Cardiac septum (tissue), 1 donor: ENCODE measurements at regions of chr5 and their contacts with region 1.

Region 1: GRCh38 chr5:142324871-142325724 is at the start of gene SPRY4:
- DNase-seq: peak; percentile 93
- total RNA-seq, gene SPRY4: 20.6 TPM

Region 2: GRCh38 chr5:142151436-142152383 is 173.4 kb before region 1 on chr5:
- intact Hi-C with region 1: loop called (anchors 2 kb)
- DNase-seq: no peak

Region 3: DNA sequence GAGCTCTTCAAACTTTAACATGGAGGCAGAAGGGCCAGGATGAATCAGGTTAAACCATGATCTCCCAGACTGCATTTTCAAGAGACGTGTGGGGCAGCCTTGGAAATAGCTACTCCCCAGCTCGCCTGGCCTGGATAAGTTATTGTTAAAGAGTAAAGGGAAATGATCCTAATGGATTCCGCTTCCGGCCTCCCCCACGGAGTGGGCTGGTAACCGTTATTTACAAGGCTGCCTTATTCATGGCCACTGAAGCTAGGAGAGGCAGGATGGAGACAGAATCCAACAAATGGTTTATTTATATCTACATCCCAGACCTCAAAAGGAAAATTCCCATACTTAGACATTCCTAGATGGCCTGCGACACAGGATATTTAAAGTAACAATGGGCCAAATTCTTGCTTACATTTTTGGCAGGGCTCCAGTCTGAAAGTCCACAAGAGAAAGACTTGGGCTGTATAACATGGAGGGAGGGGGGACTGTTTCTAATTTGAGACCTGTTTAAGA is 28.1 kb before region 1 on chr5:
- intact Hi-C with region 1: loop called (anchors 2 kb)
- DNase-seq: no peak

Region 4: DNA sequence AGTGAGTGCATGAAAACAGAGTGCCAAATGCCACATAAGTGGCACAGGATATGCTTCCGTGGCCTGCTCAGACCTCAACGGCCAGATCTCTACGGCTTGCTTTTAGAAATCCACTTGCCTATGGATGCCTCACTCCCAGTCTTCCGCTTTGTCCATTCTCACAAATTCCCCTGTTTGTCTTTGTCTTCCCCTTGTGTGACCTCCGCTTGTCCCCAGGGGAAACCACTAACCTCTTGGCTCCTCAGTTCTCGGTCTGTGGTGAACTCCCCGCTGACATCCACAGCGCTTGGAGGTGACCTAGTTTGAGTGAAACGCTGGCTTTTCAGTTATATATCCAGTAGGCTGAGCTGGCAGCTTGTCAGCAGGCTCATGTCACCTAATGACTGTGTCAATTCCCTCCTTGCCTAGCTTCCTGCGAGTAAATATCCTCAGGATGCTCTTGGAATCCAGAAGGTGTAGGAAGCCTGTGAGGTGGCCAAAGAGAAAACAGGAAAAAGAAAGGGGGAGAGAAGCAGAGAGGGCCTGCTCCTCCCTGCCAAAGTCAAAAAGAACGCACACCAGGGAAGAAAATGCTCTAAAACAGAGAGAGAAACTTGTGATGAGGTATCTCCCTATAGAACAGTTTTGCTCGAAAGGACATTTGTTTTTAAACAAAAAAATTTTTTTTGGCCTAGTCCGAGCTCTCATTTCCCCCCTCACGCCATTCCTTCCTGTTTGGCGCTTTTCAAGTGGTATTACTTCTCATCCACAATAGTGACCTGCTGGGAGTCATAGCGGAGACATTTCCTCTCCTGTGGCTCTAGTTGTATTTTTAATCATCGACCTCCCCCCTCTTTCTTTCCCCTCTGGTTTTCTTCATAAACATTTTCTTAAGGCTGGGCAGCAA is 101.3 kb after region 1 on chr5:
- intact Hi-C with region 1: loop called (anchors 5 kb)
- DNase-seq: no peak

Region 5: DNA sequence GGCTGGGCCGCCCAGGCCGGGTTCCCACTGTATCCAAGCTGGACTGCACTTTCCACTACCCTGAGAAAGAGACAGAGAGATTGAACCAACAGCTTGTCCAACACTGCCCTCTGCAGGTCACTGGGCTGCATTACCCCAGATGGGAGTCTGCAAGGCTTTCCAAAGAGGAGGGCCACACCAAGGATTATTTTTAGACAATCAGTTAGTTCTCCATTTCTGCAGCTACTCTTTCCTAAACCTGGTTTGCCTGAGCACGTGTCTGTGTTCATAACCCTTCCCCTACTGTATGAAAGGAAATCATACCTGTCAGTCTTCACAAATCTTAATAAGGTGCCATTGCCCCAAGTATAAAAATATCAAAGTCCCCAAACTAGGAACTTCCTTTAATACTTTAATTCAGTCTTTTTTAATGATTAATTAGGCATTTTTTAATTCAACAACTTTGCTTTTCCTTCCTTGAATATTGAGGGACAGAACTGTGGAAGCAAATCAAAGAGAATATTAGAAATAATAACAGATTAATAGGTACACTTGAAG is 374.2 kb after region 1 on chr5:
- intact Hi-C with region 1: loop called (anchors 10 kb)
- DNase-seq: peak; percentile 94